Heart right ventricle (tissue), 16 donors: ENCODE measurements at regions of chr2 and their contacts with region 1.

Region 1: GRCh38 chr2:55175254-55176025 is 56.7 kb downstream of the CLHC1 start:
- DNase-seq: no peak
- ATAC-seq: peak in 7 of 8 donors; percentile 66 to 80 (median 72)
- H3K4me3 ChIP-seq: no peak overlapping the region
- H3K27ac ChIP-seq: no peak overlapping the region
- H3K4me1 ChIP-seq: peaks cover 0 to 8% (median 0%) of the 10 kb centered on the region in 9 donors
- H3K27me3 ChIP-seq: no peaks in the 10 kb centered on the region
- CTCF ChIP-seq: peak; percentile 33 to 78 (median 67)

Region 2: DNA sequence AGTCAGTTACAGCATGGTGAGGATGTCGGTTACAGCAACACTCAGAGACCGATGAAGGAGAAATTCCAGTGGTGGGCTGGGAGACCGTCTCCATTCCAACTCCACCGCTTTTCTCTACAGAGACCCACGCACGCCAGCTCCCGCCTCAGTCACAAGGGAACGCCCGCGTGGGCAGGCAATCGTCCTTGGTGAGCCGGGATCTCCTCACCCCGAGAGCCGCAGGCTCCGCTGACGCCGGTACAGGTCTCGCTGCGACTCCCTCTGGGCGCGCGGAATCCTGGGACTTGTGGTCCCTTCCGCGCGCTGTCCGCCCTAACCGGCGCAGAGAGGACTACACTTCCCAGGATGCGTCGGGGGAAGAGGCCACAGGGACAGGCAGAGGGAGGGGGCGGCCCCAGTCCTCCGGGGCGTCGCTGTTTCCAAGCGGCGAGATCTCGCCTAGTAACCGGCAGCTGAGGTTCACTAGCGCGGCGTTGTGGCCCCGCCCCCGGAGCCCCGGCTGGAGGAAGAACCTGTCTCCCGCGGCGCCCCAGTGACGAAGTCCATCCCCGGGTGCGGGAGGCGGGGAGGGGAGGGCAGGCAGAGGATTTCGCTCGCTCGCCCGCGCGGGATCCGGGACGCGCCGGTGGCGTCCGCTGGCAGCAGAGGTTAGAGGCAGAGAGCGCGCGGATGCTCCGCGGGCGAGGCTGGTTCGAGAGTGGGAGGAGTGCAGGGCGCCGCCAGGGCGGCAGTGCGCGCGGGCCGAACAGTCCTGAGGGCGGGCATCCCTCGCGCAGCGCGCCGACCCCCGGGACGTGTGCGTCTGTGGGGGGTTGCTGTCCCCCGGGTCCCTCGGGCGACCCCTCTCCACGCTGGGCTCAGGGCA is 452.1 kb before region 1 on chr2 and contains the start of gene EML6:
- intact Hi-C with region 1: loop called in 1 of 10 experiments (anchors 10 kb)
- DNase-seq: peak; percentile 97 to 98
- ATAC-seq: peak; percentile 99 to 100 (median 100)
- H3K4me3 ChIP-seq: peak within 1 kb of the TSS; percentile 65 to 93 (median 82)
- H3K27ac ChIP-seq: peak within 1 kb of the TSS in 9 of 10 donors; percentile 65 to 81 (median 70)
- H3K4me1 ChIP-seq: peaks cover 0 to 17% (median 9%) of the 10 kb centered on the region in 9 donors
- H3K27me3 ChIP-seq: peaks cover 0 to 50% (median 0%) of the 10 kb centered on the region in 7 donors
- CTCF ChIP-seq: peak in 7 of 9 donors; percentile 16 to 47 (median 27)
- total RNA-seq, gene EML6: 0.12 to 1.5 (median 0.32) TPM

Region 3: GRCh38 chr2:54894467-54894866 is 281.0 kb before region 1 on chr2:
- intact Hi-C with region 1: loop called in 4 of 10 experiments (anchors 5 kb)
- DNase-seq: no peak
- ATAC-seq: no peak
- H3K4me3 ChIP-seq: no peak overlapping the region
- H3K27ac ChIP-seq: no peak overlapping the region
- H3K4me1 ChIP-seq: no peaks in the 10 kb centered on the region
- H3K27me3 ChIP-seq: no peaks in the 10 kb centered on the region
- CTCF ChIP-seq: no peak

Region 4: GRCh38 chr2:54899576-54900200 is 275.8 kb before region 1 on chr2:
- intact Hi-C with region 1: loop called in 5 of 10 experiments (anchors 5 kb)
- DNase-seq: no peak
- ATAC-seq: peak in 6 of 8 donors; percentile 52 to 76 (median 70)
- H3K4me3 ChIP-seq: no peak overlapping the region
- H3K27ac ChIP-seq: no peak overlapping the region
- H3K4me1 ChIP-seq: peaks cover 0 to 12% (median 0%) of the 10 kb centered on the region in 9 donors
- H3K27me3 ChIP-seq: no peaks in the 10 kb centered on the region
- CTCF ChIP-seq: peak; percentile 20 to 77 (median 63)

Region 5: GRCh38 chr2:55014962-55015939 is 160.2 kb before region 1 on chr2:
- intact Hi-C with region 1: loop called in 3 of 10 experiments (anchors 2 to 10 kb)
- DNase-seq: peak in 1 of 2 donors; percentile 48
- ATAC-seq: peak in 7 of 8 donors; percentile 64 to 87 (median 79)
- H3K4me3 ChIP-seq: no peak overlapping the region
- H3K27ac ChIP-seq: no peak overlapping the region
- H3K4me1 ChIP-seq: peaks cover 0 to 95% (median 52%) of the 10 kb centered on the region in 9 donors
- H3K27me3 ChIP-seq: no peaks in the 10 kb centered on the region
- CTCF ChIP-seq: peak; percentile 30 to 79 (median 70)

Region 6: GRCh38 chr2:55364189-55365055 is 189.0 kb after region 1 on chr2:
- intact Hi-C with region 1: no loop called
- DNase-seq: peak in 1 of 2 donors; percentile 69
- ATAC-seq: peak; percentile 61 to 94 (median 92)
- H3K4me3 ChIP-seq: no peak overlapping the region
- H3K27ac ChIP-seq: peak overlapping the region in 3 of 10 donors; percentile 4 to 25 (median 7)
- H3K4me1 ChIP-seq: peaks cover 0 to 24% (median 9%) of the 10 kb centered on the region in 9 donors
- H3K27me3 ChIP-seq: no peaks in the 10 kb centered on the region
- CTCF ChIP-seq: no peak